AG04450 (cell line): ENCODE measurements at regions of chr1 and their contacts with region 1.

Region 1: GRCh38 chr1:170531758-170532657 is at the start of gene GORAB:
- DNase-seq: peak; percentile 87
- H3K4me3 ChIP-seq: peak within 1 kb of the TSS; percentile 69
- H3K27ac ChIP-seq: peak within 1 kb of the TSS; percentile 99
- H3K27me3 ChIP-seq: no peaks in the 10 kb centered on the region
- CTCF ChIP-seq: no peak
- polyA plus RNA-seq, gene GORAB: 15.0 and 23.5 TPM in 2 replicates

Region 2: GRCh38 chr1:170385750-170386149 is 146.3 kb before region 1 on chr1:
- CTCF ChIA-PET with region 1: no interaction called
- POLR2A ChIA-PET with region 1: interaction called, 14 read pairs
- DNase-seq: no peak
- H3K4me3 ChIP-seq: no peak overlapping the region
- H3K27ac ChIP-seq: no peak overlapping the region
- H3K27me3 ChIP-seq: no peaks in the 10 kb centered on the region
- CTCF ChIP-seq: no peak

Region 3: DNA sequence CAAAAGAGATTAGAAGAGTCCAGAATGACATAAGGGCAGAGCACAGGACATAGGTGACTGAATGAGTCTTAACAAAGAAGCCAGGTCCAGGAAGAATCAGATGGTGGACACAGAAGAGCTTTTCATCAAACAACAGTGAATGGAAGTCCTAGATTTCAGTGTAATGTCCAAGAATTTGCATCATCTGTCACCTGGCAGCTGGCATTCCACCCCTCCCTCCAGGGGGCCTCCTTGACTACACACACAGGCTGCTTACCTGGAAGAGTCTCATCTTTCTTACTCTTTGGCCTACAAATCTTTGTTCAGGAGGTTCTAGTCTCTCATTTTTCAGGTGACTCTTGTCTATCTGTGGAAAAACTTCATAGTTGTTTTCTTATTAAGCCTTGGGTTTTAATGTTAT is 36.2 kb after region 1 on chr1:
- CTCF ChIA-PET with region 1: no interaction called
- POLR2A ChIA-PET with region 1: no interaction called
- DNase-seq: no peak
- H3K4me3 ChIP-seq: no peak overlapping the region
- H3K27ac ChIP-seq: no peak overlapping the region
- H3K27me3 ChIP-seq: no peaks in the 10 kb centered on the region
- CTCF ChIP-seq: no peak

Region 4: DNA sequence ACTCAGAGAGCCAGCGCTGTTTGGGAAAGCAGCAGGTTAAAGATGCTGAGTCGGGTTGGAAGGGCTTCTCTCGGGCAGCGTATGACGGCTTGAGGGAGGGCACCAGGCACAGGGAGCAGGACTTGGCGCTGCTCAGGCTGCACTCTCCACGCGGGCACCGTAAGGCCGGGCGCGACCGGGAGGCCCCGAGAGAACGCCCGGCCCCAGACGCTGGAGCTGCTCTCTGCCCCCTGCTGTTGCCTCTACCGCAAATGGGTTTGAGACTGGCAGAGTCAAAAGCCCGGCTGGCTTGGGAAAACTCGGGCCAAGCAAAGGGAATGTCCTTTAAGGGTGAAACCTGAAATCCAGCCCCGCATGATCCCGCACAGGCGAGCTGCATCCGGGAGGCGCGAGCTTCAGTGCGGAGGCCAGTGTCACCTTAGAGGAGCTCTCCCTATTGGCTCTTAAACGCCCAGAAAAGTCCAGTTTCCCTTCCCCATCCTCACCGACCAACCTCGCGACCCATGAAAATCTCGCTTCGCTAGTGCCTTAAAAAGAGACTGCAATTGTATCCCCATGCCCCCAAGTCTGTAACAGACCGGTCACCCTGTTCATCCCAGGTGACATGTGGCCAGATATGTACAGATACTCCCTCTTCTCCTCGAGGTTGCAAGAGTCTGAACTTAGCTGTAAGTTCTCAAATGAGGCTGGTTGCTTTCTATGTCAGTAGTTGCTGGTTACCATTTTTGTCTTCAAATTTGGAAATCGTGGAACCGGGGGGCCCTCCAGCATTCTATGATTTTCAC is 133.0 kb after region 1 on chr1:
- CTCF ChIA-PET with region 1: no interaction called
- POLR2A ChIA-PET with region 1: interaction called, 10 read pairs
- DNase-seq: no peak
- H3K4me3 ChIP-seq: peak overlapping the region; percentile 94
- H3K27ac ChIP-seq: peak overlapping the region; percentile 89
- H3K27me3 ChIP-seq: no peaks in the 10 kb centered on the region
- CTCF ChIP-seq: peak; percentile 51